ENCODE measurements at regions of chr9 and their contacts with region 1.

Region 1: GRCh38 chr9:122125158-122125508 is 32.0 kb upstream of the TTLL11 start:
- DNase-seq: peak; percentile 79 to 92 (median 91)
- ATAC-seq: peak; percentile 72 to 82
- H3K4me3 ChIP-seq: no peak overlapping the region
- H3K27ac ChIP-seq: no peak overlapping the region
- H3K4me1 ChIP-seq: no peaks in the 10 kb centered on the region
- H3K27me3 ChIP-seq: no peaks in the 10 kb centered on the region

Region 2: DNA sequence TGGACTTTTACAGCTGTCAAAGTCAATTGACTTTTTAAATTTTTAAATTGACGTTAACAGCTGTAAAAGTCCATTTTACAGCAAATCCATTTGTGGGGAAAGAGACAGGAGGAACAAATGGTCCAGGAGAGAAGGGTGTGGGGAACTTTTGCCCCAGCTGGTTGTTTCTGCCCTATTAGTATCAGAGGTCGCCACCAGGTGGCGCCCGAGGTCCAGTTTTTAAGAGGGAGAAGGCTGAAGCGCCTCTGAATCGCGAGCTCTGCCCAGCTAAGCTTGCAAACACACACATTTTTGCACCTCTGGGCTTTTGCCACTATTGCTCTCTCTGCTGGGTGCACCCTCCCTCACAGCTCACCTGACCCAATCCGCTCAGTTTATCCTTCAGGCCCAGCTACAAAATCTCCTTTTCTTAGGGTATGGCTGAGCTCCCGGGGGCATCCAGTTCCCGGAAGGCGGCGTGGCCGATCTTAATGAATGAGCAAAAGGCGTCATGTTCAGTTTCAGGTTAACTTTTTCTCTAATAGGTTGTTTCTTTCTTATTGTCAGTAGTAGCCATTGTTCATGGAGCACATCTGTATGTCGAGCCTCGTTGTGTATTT is 25.8 kb before region 1 on chr9:
- intact Hi-C with region 1: loop called in 2 of 4 experiments (anchors 2 kb)
- DNase-seq: peak; percentile 83 to 96 (median 91)
- ATAC-seq: peak; percentile 66 to 76
- H3K4me3 ChIP-seq: no peak overlapping the region
- H3K27ac ChIP-seq: no peak overlapping the region
- H3K4me1 ChIP-seq: no peaks in the 10 kb centered on the region
- H3K27me3 ChIP-seq: no peaks in the 10 kb centered on the region

Region 3: DNA sequence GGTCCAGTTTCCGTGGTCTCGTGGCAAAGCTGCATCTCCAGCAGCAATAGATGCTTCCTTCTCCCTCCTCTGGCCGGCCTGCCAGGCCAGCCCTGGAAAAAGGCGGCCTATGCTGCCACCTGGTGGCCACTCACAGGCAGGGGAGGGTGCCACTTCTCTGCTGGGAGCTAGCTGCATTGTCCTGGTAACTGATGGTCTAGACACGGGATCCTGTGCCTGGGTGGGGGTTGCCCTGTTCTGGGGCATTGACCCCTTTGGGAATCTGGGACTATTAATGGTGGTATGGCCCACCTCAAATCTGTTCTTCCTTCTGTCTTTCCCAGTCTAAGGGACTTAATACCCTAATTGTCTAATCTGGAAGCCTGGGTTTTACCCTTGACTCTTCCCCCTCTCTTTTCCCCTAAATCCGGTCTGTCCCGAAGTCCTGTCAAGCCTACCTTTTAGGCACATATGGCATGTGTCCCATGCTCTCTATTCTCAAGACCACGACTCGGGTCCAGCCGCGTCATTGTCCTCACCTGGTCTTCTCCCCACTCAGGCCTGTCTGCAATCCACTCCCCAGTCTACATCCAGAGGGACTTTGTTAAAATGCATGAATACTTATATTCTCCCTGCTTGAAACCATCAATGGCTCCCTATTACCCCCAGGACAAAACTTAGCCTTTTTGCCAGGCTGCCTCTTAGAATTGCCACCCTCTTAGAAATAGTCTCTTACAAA is 225.7 kb after region 1 on chr9:
- intact Hi-C with region 1: loop called (anchors 1 to 2 kb)
- DNase-seq: peak; percentile 84 to 93 (median 88)
- ATAC-seq: peak; percentile 77 to 83
- H3K4me3 ChIP-seq: no peak overlapping the region
- H3K27ac ChIP-seq: no peak overlapping the region
- H3K4me1 ChIP-seq: peaks cover 7% of the 10 kb centered on the region
- H3K27me3 ChIP-seq: no peaks in the 10 kb centered on the region

Region 4: GRCh38 chr9:122453677-122454135 is 328.6 kb after region 1 on chr9:
- intact Hi-C with region 1: loop called in 3 of 4 experiments (anchors 5 to 10 kb)
- DNase-seq: no peak
- ATAC-seq: peak in 1 of 2 donors; percentile 80
- H3K4me3 ChIP-seq: no peak overlapping the region
- H3K27ac ChIP-seq: no peak overlapping the region
- H3K4me1 ChIP-seq: no peaks in the 10 kb centered on the region
- H3K27me3 ChIP-seq: no peaks in the 10 kb centered on the region

Region 5: GRCh38 chr9:122810306-122810946 is 685.3 kb after region 1 on chr9:
- intact Hi-C with region 1: loop called in 1 of 4 experiments (anchors 10 kb)
- DNase-seq: peak; percentile 63 to 81 (median 80)
- ATAC-seq: peak; percentile 89 to 91
- H3K4me3 ChIP-seq: no peak overlapping the region
- H3K27ac ChIP-seq: no peak overlapping the region
- H3K4me1 ChIP-seq: no peaks in the 10 kb centered on the region
- H3K27me3 ChIP-seq: no peaks in the 10 kb centered on the region